PC-3 (cell line): ENCODE measurements at regions of chr5 and their contacts with region 1.

Region 1: GRCh38 chr5:14767735-14768507 is 103.4 kb downstream of the OTULIN start:
- DNase-seq: peak; percentile 94
- ATAC-seq: peak; percentile 99
- H3K4me3 ChIP-seq: no peak overlapping the region
- H3K27ac ChIP-seq: peak overlapping the region; percentile 61
- H3K4me1 ChIP-seq: peaks cover 14% of the 10 kb centered on the region
- H3K27me3 ChIP-seq: no peaks in the 10 kb centered on the region
- CTCF ChIP-seq: no peak

Region 2: DNA sequence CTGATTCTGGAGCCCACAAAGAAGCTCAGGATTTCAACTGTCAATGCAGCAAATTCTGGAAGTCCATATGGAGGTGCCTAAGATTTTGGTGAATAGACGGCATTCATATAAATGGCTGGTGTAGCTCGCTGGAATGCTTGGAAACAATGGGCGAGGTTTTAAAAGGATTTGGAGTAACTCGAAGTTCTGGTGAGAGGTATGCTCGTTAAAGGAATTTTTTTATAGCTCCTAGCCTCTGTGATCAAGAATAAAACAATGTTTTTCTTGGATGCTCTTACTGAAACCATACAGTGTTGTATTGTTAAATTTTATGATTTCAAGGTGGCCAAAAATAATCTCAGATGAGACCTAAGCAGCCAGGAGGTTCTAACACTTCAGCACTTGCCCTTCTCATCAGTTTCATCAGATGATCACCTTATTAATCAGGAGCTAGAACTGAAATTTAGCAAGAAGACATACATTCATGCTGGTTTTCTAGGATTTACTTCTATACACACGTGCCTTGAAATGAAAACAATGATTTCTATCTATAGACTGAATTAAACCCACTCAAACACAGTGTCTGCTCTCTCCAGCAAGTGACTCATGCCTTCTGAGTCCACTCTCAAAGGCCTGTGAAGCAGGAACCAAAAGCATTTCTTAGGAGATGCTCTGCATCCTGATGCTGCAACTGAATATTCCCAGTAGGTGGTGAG is 24.2 kb before region 1 on chr5:
- CTCF ChIA-PET with region 1: no interaction called
- POLR2A ChIA-PET with region 1: no interaction called
- intact Hi-C with region 1: loop called (anchors 1 kb)
- DNase-seq: peak; percentile 71
- ATAC-seq: peak; percentile 68
- H3K4me3 ChIP-seq: no peak overlapping the region
- H3K27ac ChIP-seq: peak overlapping the region; percentile 51
- H3K4me1 ChIP-seq: peaks cover 40% of the 10 kb centered on the region
- H3K27me3 ChIP-seq: no peaks in the 10 kb centered on the region
- CTCF ChIP-seq: no peak

Region 3: GRCh38 chr5:14890846-14891245 is 122.9 kb after region 1 on chr5:
- CTCF ChIA-PET with region 1: no interaction called
- POLR2A ChIA-PET with region 1: no interaction called
- intact Hi-C with region 1: no loop called
- DNase-seq: no peak
- ATAC-seq: no peak
- H3K4me3 ChIP-seq: no peak overlapping the region
- H3K27ac ChIP-seq: no peak overlapping the region
- H3K4me1 ChIP-seq: no peaks in the 10 kb centered on the region
- H3K27me3 ChIP-seq: peaks cover 6% of the 10 kb centered on the region; the same call in 1 of the 2 replicates
- CTCF ChIP-seq: no peak